A549 (cell line): ENCODE measurements at regions of chr9 and their contacts with region 1.

Region 1: DNA sequence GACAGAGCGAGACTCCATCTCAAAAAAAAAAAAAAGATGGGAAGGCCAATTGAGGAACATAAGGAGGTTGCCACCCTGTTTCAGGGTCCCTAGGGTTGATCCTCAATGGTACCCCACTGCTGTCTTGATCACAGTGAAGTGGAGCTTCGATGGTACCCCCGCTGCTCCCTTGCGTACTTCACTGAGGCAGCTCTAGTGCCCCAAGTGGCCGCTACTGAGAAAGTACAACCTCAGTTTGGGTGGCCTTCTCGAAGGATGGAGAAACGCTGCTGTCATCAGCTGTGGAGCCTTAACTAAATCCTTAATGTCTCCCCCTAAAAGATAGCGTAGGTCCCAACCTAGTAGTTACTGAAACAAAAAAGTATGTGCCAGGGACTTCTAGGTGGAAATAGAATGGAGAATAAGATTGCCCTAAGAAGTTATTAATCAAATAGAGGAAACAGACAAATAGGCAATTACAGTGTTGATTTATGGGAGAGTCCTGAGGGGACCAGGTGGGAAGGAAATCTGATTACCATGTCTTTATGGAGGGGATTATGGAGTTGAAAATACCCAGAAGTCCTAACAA is 6.3 kb downstream of the TESK1 start:
- DNase-seq: peak; percentile 53 to 64
- ATAC-seq: peak; percentile 74 to 87
- H3K4me3 ChIP-seq: no peak overlapping the region
- H3K27ac ChIP-seq: no peak overlapping the region
- H3K4me1 ChIP-seq: peaks cover 8% of the 10 kb centered on the region
- CTCF ChIP-seq: peak; percentile 61
- EP300 ChIP-seq: no peak
- POLR2A ChIP-seq: no peak
- RAD21 ChIP-seq: peak in 1 of 2 experiments; percentile 35; a peak in 1 of 5 replicates

Region 2: DNA sequence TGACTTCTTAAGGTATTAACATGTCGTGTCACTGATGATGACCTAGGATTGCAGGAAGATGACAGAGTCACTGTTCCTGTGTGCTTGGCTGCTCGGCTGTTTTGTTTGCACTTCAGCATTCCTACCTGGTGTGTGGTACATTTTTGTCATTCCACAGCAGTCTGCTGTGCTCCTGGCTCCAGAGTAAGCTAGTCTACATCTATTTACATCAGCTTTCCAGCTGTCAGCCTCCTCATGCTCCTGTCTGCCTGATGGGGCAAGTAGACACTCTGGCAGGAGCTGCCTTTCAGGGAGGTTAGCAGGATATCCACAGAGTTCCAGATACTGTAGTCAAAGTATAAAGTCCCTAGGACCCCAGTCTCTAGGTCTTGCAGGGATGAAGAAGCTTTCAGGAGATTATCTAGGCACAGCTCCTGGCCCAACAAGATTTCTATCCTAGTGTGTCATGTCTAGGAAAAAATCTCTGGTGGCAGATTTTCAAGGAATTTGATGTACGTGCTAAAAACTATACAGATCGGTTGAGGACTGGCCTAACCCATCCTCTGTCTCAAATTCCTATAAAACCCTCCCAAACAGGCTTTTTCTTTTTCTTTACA is 93.0 kb before region 1 on chr9:
- CTCF ChIA-PET with region 1: no interaction called
- POLR2A ChIA-PET with region 1: no interaction called
- DNase-seq: peak; percentile 95 to 98
- ATAC-seq: peak; percentile 91
- H3K4me3 ChIP-seq: no peak overlapping the region
- H3K27ac ChIP-seq: peak overlapping the region; percentile 95 to 96
- H3K4me1 ChIP-seq: peaks cover 96% of the 10 kb centered on the region
- CTCF ChIP-seq: no peak
- EP300 ChIP-seq: peak; percentile 99
- POLR2A ChIP-seq: no peak
- RAD21 ChIP-seq: peak; percentile 35 to 69

Region 3: DNA sequence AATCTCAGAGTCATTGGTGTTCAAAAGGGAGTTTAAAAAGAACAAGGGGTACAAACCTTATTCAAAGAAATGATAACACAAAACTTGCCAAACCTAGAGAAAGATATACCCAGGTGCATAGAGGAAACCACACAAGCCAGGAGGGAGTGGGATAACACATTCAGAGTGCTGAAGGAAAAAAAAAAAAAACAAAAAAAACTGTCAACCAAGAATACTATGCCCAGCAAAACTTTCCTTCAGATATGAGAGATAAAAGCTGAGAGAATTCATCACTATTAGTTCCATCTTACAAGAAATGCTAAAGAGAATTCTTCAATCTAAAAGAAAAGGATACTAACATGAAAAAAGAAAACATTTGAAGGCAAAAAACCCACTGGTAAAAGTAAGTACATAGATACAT is 17.7 kb before region 1 on chr9:
- CTCF ChIA-PET with region 1: no interaction called
- POLR2A ChIA-PET with region 1: no interaction called
- DNase-seq: no peak
- ATAC-seq: no peak
- H3K4me3 ChIP-seq: no peak overlapping the region
- H3K27ac ChIP-seq: no peak overlapping the region
- H3K4me1 ChIP-seq: no peaks in the 10 kb centered on the region
- CTCF ChIP-seq: no peak
- EP300 ChIP-seq: no peak
- POLR2A ChIP-seq: no peak
- RAD21 ChIP-seq: no peak

Region 4: GRCh38 chr9:35628389-35628991 is 17.2 kb after region 1 on chr9:
- CTCF ChIA-PET with region 1: interaction called, 24 read pairs
- POLR2A ChIA-PET with region 1: no interaction called
- DNase-seq: no peak
- ATAC-seq: peak in 1 of 2 experiments; percentile 50; a peak in 1 of 6 replicates
- H3K4me3 ChIP-seq: no peak overlapping the region
- H3K27ac ChIP-seq: no peak overlapping the region
- H3K4me1 ChIP-seq: no peaks in the 10 kb centered on the region
- CTCF ChIP-seq: no peak
- EP300 ChIP-seq: no peak
- POLR2A ChIP-seq: no peak
- RAD21 ChIP-seq: no peak